Ovary (tissue), 10 donors: ENCODE measurements at regions of chr19 and their contacts with region 1.

Region 1: GRCh38 chr19:42233678-42234292 is 8.6 kb downstream of the GSK3A start:
- DNase-seq: no peak
- H3K4me3 ChIP-seq: no peak overlapping the region
- H3K27ac ChIP-seq: no peak overlapping the region
- H3K4me1 ChIP-seq: no peaks in the 10 kb centered on the region
- H3K27me3 ChIP-seq: no peaks in the 10 kb centered on the region
- CTCF ChIP-seq: no peak
- EP300 ChIP-seq: no peak
- POLR2A ChIP-seq: no peak

Region 2: DNA sequence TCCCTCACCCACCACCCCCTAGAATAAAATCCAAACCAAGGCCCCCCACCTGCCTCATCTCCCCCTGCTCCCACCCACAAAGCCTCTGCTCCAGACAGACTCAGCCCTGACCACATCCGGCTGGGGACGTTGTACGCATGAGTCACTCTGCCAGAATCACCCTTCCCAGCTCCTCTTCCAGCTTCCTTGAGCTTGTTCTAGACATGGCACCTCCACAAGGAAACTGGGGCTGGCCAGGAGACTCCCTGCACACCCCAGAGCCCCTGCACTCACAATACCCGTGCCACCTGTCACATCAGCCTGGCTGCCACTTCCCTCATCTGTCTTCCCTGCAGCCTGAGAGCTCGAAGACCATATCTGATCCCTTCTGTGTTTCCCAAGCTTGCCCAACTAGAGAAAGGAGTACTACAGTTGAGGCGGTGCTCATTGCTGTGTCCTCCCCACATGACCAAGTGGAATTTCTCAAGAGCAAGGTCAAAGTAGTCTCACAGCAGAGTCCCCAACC is 26.0 kb before region 1 on chr19:
- intact Hi-C with region 1: loop called in 1 of 4 experiments (anchors 2 kb)
- DNase-seq: no peak
- H3K4me3 ChIP-seq: no peak overlapping the region
- H3K27ac ChIP-seq: no peak overlapping the region
- H3K4me1 ChIP-seq: no peaks in the 10 kb centered on the region
- H3K27me3 ChIP-seq: no peaks in the 10 kb centered on the region
- CTCF ChIP-seq: no peak
- EP300 ChIP-seq: no peak
- POLR2A ChIP-seq: no peak